Cardiac septum (tissue), 1 donor: ENCODE measurements at regions of chr14 and their contacts with region 1.

Region 1: GRCh38 chr14:83463500-83464098 is 1929.9 kb upstream of the SEL1L start:
- DNase-seq: no peak

Region 2: DNA sequence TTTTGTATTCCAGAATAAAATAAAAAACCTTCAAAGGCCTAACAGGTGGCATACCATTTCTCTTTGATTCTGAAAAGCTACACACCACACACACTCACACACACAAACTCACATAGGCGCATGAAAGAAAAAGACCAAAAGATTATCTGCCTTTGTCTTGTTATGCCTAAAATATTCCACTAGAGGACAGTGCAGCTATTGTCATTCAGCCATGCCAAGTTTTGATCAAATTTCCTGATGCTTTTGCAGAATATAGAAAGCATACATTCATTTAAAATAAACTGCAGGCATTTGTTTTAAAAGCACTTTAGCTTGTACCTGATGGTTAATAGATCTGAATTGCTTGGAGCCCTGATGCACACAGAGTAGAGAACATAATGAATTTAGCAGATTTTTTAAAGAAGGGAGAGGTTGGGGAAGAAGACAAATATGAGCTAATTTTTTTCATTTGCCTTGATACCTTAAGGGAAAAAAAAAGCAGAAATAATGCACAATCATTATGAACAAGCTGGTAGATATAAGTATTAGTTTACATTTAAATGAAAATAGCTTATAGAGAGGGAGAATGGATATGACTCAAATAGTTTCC is 163.0 kb before region 1 on chr14:
- intact Hi-C with region 1: loop called (anchors 10 kb)
- DNase-seq: no peak